ENCODE measurements at regions of chr14 and their contacts with region 1.

Region 1: DNA sequence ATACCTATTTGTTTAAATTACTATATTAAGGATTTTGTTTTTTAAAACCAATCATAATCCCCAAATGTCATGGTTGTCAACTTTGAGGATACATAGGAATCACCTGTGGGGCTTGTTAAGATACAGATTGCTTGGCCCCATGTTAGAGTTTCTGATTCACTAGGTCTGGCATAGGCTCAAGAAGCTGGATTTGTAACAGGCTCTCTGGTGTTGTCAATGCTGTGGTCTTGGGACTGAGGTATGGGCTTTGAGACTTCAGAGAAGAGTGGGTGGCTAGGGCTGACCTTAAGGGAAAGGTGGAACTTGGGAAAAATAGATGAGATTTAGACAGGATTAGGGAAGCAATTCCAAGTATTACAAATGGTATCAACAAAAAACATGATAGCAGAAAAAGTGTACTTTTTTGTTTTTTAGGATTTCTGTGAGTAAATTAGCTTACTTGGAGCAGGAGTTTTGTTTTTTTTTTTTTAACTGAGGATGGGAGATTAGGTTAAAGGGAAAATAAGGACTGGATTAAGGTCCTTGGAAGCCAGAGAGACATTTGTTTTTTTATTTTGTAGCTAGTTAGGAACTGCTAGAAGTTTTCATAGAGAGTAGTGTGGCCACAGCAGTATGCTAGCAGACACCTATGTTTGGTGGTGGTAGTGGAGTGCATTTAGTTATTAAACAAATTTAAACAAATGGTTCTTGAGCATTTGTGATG is 88.6 kb downstream of the RAD51B start:
- DNase-seq: no peak
- H3K4me3 ChIP-seq: no peak overlapping the region
- H3K27ac ChIP-seq: no peak overlapping the region
- H3K4me1 ChIP-seq: no peaks in the 10 kb centered on the region
- H3K27me3 ChIP-seq: no peaks in the 10 kb centered on the region
- CTCF ChIP-seq: no peak

Region 2: DNA sequence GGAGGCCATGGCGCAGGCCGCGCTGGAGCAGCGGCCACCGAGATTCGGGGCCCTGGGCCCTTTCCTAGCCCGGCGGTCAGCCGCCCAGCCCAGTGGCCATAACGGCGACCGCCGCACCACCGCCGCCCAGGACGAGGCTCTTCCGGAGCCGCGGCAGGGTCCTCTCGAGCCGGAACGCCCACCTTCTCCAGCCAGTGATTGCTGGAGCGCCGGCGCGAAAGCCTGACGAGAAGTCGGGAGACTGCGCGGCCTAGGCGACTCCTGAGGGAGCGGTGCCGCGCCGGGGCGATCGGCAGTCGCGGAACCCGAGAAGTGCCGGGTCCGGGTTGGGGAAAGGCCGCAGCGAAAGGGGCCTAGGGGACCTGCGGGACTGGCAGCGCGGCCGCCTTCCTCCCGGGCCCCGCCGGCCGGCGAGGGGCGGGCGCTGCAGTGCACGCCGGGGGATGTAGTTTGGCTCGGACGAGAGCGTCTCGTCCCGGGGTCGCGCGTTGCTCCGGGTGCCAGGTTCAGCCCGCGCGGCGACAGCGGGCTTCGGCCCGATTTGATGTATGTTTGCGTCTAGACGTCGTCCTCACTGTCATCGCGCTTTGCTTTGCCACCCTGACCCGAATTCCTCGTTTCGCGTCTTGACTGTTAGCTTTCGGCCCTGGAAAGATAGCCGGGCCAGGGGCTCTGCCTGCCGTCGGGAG is 233.6 kb before region 1 on chr14 and contains the start of gene VTI1B:
- CTCF ChIA-PET with region 1: no interaction called
- dilution Hi-C with region 1: no loop called
- in situ Hi-C with region 1: no loop called
- intact Hi-C with region 1: no loop called
- DNase-seq: peak; percentile 73
- H3K4me3 ChIP-seq: peak within 1 kb of the TSS; percentile 75 to 95 (median 93)
- H3K27ac ChIP-seq: peak within 1 kb of the TSS; percentile 89
- H3K4me1 ChIP-seq: peaks cover 20% of the 10 kb centered on the region
- H3K27me3 ChIP-seq: no peaks in the 10 kb centered on the region
- CTCF ChIP-seq: peak in 1 of 2 donors; percentile 23
- total RNA-seq, gene VTI1B: 37.3 to 72.8 TPM

Region 3: DNA sequence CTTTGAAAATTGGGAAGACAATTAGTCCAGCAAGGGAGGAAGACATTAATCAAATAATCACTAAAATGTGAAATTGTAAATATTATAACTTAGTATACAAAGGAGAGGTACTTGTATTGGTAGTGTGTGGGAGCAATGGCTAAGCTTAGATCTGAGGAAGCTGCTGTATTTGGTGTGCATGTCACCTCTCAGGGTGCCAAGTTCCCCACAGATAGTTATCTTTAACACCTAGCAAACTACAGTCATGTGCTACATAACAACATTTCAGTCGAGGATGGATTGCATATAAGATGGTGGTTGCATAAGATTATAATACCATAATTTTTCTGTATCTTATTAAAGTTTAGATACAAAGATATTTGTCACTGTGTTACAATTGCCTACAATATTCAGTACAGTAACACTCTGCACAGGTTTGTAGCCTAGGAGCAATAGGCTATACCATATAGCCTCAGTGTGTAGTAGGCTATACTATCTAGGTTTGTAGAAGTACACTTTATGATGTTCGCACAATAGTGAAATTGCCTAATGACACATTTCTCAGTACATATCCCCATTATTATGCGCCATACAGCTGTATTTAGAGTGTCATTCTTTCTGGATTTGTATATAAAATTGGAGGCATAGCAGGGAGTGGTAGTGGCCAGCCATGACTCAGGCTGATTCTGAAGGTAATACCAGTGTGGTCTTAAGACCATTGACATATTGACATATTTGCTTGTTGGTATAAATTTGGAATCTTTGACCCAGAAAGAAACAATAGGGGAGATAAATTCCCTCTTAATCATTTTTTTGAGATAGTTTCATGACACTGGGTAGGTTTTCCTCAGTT is 32.8 kb before region 1 on chr14:
- CTCF ChIA-PET with region 1: no interaction called
- dilution Hi-C with region 1: no loop called
- in situ Hi-C with region 1: no loop called
- intact Hi-C with region 1: no loop called
- DNase-seq: no peak
- H3K4me3 ChIP-seq: no peak overlapping the region
- H3K27ac ChIP-seq: no peak overlapping the region
- H3K4me1 ChIP-seq: no peaks in the 10 kb centered on the region
- H3K27me3 ChIP-seq: no peaks in the 10 kb centered on the region
- CTCF ChIP-seq: no peak

Region 4: GRCh38 chr14:67892466-67893100 is 15.6 kb before region 1 on chr14:
- CTCF ChIA-PET with region 1: interaction called, 10 read pairs
- dilution Hi-C with region 1: no loop called
- in situ Hi-C with region 1: no loop called
- intact Hi-C with region 1: no loop called
- DNase-seq: no peak
- H3K4me3 ChIP-seq: no peak overlapping the region
- H3K27ac ChIP-seq: no peak overlapping the region
- H3K4me1 ChIP-seq: no peaks in the 10 kb centered on the region
- H3K27me3 ChIP-seq: no peaks in the 10 kb centered on the region
- CTCF ChIP-seq: no peak